Ovary (tissue), 10 donors: ENCODE measurements at regions of chr18 and their contacts with region 1.

Region 1: GRCh38 chr18:46199515-46200147 is 95.4 kb downstream of the HAUS1 start:
- DNase-seq: no peak
- H3K4me3 ChIP-seq: no peak overlapping the region
- H3K27ac ChIP-seq: no peak overlapping the region
- H3K4me1 ChIP-seq: peaks cover 6% of the 10 kb centered on the region
- H3K27me3 ChIP-seq: no peaks in the 10 kb centered on the region
- CTCF ChIP-seq: no peak
- EP300 ChIP-seq: no peak
- POLR2A ChIP-seq: no peak

Region 2: GRCh38 chr18:44848644-44849335 is 1350.8 kb before region 1 on chr18:
- intact Hi-C with region 1: loop called in 1 of 4 experiments (anchors 10 kb)
- DNase-seq: peak in 4 of 5 donors; percentile 33 to 65 (median 54)
- H3K4me3 ChIP-seq: no peak overlapping the region
- H3K27ac ChIP-seq: no peak overlapping the region
- H3K4me1 ChIP-seq: peaks cover 13% of the 10 kb centered on the region
- H3K27me3 ChIP-seq: no peaks in the 10 kb centered on the region
- CTCF ChIP-seq: no peak
- EP300 ChIP-seq: no peak
- POLR2A ChIP-seq: no peak